GM12878 (cell line): ENCODE measurements at regions of chr4 and their contacts with region 1.

Region 1: DNA sequence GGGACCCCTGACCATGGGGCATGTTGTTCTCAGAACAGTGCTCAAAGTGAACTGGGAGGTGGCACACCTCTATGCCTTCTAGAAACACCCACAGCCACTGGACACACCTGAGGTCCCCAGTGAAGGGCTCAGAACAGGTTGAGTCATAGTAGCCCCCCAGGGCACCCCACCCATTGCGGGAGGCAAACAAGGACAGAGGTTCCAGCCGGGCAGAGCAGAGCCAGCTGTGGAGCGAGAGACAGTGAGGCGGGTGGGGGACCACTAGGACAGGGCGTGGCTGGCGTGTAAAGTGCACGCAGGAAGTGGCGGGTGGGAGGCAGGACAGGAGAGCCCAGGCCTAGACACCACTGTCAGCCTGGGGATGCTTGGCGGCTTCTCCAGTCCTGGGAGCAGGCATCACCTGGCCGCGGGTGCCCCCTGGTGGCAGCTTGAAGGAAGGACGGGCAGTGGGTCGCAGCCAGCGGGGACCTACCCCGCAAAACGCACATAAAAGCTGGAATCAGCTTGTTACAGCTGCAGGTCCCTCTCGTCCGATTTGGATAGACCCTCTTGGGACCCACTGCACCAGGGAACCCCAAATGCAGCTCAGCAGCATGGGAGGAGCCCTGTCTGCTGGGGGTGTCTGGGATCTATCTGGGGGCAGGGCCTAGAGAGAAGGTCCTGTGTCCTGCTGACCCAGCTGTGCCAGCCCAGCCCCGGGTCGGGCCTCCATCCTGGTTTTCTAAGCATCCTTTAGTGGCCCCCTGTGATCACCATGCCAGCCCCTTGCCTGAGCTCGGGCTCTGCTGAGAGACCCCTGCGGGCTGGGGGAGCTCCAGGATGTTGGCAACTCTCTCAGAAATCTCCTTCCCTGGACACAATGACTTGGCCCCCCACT is 57.6 kb downstream of the WFS1 start:
- DNase-seq: no peak
- ATAC-seq: peak; percentile 81
- H3K4me3 ChIP-seq: no peak overlapping the region
- H3K27ac ChIP-seq: no peak overlapping the region
- H3K4me1 ChIP-seq: no peaks in the 10 kb centered on the region; the same call in 1 of the 2 replicates
- H3K27me3 ChIP-seq: peaks cover 3% of the 10 kb centered on the region in 2 experiments; a peak in 3 of 4 replicates
- CTCF ChIP-seq: peak; percentile 87 to 91 (median 90); a peak in 5 of 6 replicates
- EP300 ChIP-seq: no peak
- POLR2A ChIP-seq: no peak
- RAD21 ChIP-seq: peak; percentile 97

Region 2: GRCh38 chr4:6076391-6076790 is 250.9 kb before region 1 on chr4:
- CTCF ChIA-PET with region 1: interaction called, 6 read pairs
- POLR2A ChIA-PET with region 1: no interaction called
- RAD21 ChIA-PET with region 1: interaction called, 3 read pairs
- SMC1A ChIA-PET with region 1: no interaction called
- in situ Hi-C with region 1: no loop called
- intact Hi-C with region 1: loop called (anchors 1 kb)
- DNase-seq: no peak
- ATAC-seq: peak; percentile 73
- H3K4me3 ChIP-seq: no peak overlapping the region
- H3K27ac ChIP-seq: no peak overlapping the region
- H3K4me1 ChIP-seq: no peaks in the 10 kb centered on the region
- H3K27me3 ChIP-seq: no peaks in the 10 kb centered on the region
- CTCF ChIP-seq: peak; percentile 40 to 51 (median 41)
- EP300 ChIP-seq: no peak
- POLR2A ChIP-seq: no peak
- RAD21 ChIP-seq: peak; percentile 67

Region 3: GRCh38 chr4:6200011-6200921 is 127.0 kb before region 1 on chr4 and contains the start of gene JAKMIP1:
- CTCF ChIA-PET with region 1: interaction called, 10 read pairs
- POLR2A ChIA-PET with region 1: no interaction called
- RAD21 ChIA-PET with region 1: interaction called, 7 read pairs
- SMC1A ChIA-PET with region 1: interaction called, 3 read pairs
- in situ Hi-C with region 1: no loop called
- intact Hi-C with region 1: no loop called
- DNase-seq: no peak
- ATAC-seq: peak; percentile 62
- H3K4me3 ChIP-seq: peak within 1 kb of the TSS; percentile 98
- H3K27ac ChIP-seq: peak within 1 kb of the TSS; percentile 85
- H3K4me1 ChIP-seq: peaks cover 30% of the 10 kb centered on the region
- H3K27me3 ChIP-seq: no peaks in the 10 kb centered on the region
- CTCF ChIP-seq: no peak
- EP300 ChIP-seq: no peak
- POLR2A ChIP-seq: peak; percentile 69
- RAD21 ChIP-seq: no peak
- polyA plus RNA-seq, gene JAKMIP1: 0.52 to 1.6 TPM

Region 4: DNA sequence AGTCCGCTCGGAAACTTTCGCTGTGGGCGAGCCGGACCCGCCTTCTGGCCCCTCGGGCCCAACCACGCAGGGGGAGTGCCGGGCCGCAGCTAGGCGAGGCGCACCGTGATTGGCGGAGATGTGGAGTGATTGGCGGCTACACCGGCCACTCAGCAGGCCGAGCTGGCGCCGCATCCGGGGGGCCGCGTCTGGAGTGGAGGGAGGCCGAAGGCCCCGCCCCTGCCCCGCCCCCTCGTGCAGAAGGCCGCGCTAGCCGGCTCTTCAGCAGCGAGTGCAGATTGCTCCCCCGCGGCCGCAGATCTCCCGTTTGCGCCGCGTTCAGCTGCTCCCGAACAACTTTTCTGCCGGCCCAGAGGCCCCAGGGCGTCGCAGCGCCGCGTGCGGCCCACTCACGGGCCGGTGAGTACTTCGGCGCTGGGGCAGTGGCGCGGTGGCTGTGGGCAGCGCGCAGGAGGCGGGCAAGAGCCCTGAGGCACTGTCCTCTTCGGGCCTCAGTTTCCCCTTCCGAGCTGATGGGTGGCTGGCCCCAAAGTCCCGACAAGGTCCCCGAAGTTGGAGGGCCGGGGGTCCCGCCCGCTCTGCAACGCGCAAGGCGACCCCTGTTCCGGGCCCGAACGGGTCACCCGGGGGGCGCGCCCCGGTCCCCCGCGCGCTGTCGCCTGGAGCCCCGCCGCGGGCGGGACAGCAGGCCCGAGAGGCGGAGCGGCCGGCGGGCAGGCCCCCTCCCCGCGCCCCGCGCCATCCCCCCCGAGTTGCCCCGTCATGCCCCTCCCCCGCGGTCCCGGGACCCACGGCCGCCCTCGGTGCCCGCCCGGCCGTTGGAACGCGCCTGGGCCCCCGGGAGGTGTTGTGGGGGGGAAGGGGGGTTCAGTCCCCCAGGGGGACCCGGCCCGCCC is 57.4 kb before region 1 on chr4 and contains the start of gene WFS1:
- CTCF ChIA-PET with region 1: interaction called, 419 read pairs
- POLR2A ChIA-PET with region 1: interaction called, 6 read pairs
- RAD21 ChIA-PET with region 1: interaction called, 156 read pairs
- SMC1A ChIA-PET with region 1: interaction called, 57 read pairs
- in situ Hi-C with region 1: no loop called
- intact Hi-C with region 1: no loop called
- DNase-seq: peak; percentile 82
- ATAC-seq: peak; percentile 100
- H3K4me3 ChIP-seq: peak within 1 kb of the TSS; percentile 93
- H3K27ac ChIP-seq: no peak within 1 kb of the TSS
- H3K4me1 ChIP-seq: peaks cover 10% of the 10 kb centered on the region
- H3K27me3 ChIP-seq: no peaks in the 10 kb centered on the region; a peak in 1 of 4 replicates
- CTCF ChIP-seq: no peak
- EP300 ChIP-seq: no peak
- POLR2A ChIP-seq: peak; percentile 69
- RAD21 ChIP-seq: no peak
- polyA plus RNA-seq, gene WFS1: 0.31 to 0.37 TPM